ENCODE measurements at regions of chr9 and their contacts with region 1.

Region 1: GRCh38 chr9:19216466-19216865 is 14.0 kb upstream of the DENND4C start:
- DNase-seq: no peak
- H3K4me3 ChIP-seq: no peak overlapping the region
- H3K27ac ChIP-seq: no peak overlapping the region
- H3K4me1 ChIP-seq: no peaks in the 10 kb centered on the region
- H3K27me3 ChIP-seq: no peaks in the 10 kb centered on the region
- CTCF ChIP-seq: no peak

Region 2: GRCh38 chr9:19271076-19271475 is 54.6 kb after region 1 on chr9:
- CTCF ChIA-PET with region 1: no interaction called
- dilution Hi-C with region 1: no loop called
- in situ Hi-C with region 1: loop called in 1 of 2 experiments (anchors 10 kb)
- intact Hi-C with region 1: no loop called
- DNase-seq: no peak
- H3K4me3 ChIP-seq: no peak overlapping the region
- H3K27ac ChIP-seq: no peak overlapping the region
- H3K4me1 ChIP-seq: no peaks in the 10 kb centered on the region
- H3K27me3 ChIP-seq: no peaks in the 10 kb centered on the region
- CTCF ChIP-seq: no peak

Region 3: DNA sequence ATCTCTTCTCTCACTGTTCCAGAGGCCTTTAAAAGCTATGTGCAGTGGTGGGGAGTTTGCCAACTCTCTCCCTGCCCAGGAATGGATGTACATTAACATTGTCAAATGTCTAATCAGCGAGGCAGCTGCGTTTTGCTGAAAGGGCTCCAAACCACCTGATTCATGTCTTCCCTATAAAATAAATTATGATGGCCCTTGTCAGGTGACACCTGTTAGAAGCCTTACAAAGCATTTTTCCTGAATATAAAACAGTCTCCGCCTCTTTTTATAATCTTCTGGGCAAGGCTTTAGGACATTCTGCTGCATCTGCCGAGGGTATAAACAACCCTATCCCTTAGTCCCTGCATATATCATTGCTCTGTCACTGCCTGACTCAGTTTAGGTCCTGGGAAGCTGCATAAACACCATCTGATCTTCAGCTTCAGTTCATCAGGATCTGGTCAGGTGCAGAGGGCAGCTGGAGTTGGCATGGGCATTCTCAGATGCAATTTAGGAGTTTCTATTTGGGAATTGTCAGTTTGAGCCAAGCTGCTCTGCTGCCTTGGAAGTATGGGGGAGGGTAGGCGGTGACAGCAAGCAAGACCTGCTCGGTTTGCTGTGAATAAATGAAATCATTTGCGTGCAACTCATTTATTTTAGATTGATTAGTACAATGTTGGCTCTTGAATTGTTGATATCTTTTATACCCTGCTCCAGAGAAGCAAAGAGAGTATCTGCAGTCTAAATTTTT is 295.8 kb after region 1 on chr9:
- CTCF ChIA-PET with region 1: no interaction called
- dilution Hi-C with region 1: no loop called
- in situ Hi-C with region 1: no loop called
- intact Hi-C with region 1: no loop called
- DNase-seq: no peak
- H3K4me3 ChIP-seq: no peak overlapping the region
- H3K27ac ChIP-seq: no peak overlapping the region
- H3K4me1 ChIP-seq: no peaks in the 10 kb centered on the region
- H3K27me3 ChIP-seq: peaks cover 6% of the 10 kb centered on the region
- CTCF ChIP-seq: no peak